ENCODE measurements at regions of chr3 and their contacts with region 1.

Region 1: GRCh38 chr3:121855555-121855954 is 20.5 kb downstream of the EAF2 start:
- DNase-seq: peak; percentile 36
- H3K4me3 Mint-ChIP-seq: no peak overlapping the region
- H3K27ac Mint-ChIP-seq: no peak overlapping the region
- H3K4me1 Mint-ChIP-seq: no peaks in the 10 kb centered on the region
- H3K27me3 Mint-ChIP-seq: no peaks in the 10 kb centered on the region
- CTCF ChIP-seq: peak; percentile 25

Region 2: DNA sequence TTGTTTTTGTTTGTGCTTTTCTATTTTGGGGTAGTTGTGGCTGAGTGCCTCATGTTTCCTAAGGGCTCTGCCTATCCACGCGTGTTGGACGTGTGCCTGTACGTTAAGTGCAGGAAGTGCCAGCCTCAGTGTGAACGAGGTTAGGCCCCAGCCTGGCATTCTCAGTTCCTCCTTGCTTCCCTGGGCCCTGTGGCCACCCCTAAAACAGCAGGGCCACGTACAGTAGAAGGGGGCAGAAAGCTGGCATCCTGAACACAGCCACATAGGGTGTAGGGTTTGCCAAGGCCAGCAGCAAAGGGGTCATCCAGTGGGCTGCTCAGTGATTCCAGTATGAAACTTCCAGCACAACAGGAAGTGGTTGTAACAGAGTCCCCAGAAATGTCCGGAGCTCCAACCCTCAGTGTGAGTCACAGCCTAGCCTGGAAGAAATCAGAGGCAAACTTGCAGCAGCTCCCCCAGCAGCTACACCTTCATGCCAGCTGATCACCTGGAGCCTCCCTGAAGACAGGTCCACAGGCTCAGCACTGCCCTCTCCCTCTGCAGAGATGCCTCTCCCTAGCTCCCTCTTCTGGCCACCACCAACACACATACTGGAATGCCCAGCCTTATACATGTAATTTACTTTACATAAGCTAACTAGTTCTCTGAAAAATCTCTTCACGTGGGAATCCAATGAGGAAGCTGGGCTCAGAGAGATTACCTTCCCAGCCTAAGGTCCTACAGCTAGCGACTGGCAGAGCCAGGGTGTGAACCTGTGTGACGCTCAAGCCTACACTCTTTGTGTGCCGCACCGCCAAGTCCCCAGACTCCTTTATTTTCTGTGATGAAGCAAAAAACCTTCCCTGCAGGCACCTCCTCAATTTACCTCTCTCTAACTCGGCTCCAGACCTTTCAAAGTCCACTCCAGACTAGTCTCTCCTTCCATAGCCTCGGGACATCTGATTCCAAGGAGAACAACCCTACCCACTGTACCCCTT is 139.9 kb after region 1 on chr3:
- CTCF ChIA-PET with region 1: no interaction called
- intact Hi-C with region 1: loop called (anchors 1 kb)
- DNase-seq: peak; percentile 82
- H3K4me3 Mint-ChIP-seq: no peak overlapping the region
- H3K27ac Mint-ChIP-seq: peak overlapping the region; percentile 89
- H3K4me1 Mint-ChIP-seq: peaks cover 37% of the 10 kb centered on the region
- H3K27me3 Mint-ChIP-seq: no peaks in the 10 kb centered on the region
- CTCF ChIP-seq: peak; percentile 54

Region 3: DNA sequence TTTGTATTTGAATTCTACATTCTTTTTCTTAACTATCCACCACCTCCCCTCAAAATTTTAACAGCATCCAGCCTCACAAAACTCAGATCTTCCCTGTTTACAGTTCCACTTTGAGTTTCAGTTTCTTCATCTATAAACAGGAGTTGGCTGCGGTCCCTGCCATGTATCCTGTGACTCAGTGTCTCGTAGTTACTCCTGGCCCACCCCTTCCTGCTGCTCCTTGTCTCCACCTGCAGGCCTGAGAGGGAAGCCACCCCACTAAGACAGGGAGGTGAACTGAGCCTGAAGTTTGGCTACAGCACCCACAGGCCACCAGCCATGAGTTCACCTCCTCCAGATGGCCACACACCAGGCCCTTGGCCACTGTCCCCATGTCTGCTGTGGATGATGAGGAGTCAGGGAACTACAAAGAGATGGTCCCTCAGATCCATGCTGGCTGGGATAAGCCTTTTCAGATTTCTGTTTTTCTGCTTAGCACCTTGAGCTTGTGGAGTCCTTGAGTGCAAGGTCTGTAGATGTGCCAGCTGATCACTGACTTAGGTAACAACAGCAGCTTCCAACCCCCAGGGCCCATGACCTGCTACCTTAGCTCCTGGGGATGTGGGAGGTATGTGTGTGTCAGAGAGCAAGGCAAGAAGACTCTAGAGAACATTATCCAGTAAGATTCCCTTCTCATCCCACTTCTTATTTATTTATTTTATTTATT is 237.1 kb after region 1 on chr3:
- CTCF ChIA-PET with region 1: no interaction called
- intact Hi-C with region 1: loop called (anchors 2 kb)
- DNase-seq: peak; percentile 56
- H3K4me3 Mint-ChIP-seq: no peak overlapping the region
- H3K27ac Mint-ChIP-seq: no peak overlapping the region
- H3K4me1 Mint-ChIP-seq: peaks cover 11% of the 10 kb centered on the region
- H3K27me3 Mint-ChIP-seq: no peaks in the 10 kb centered on the region
- CTCF ChIP-seq: peak; percentile 39

Region 4: DNA sequence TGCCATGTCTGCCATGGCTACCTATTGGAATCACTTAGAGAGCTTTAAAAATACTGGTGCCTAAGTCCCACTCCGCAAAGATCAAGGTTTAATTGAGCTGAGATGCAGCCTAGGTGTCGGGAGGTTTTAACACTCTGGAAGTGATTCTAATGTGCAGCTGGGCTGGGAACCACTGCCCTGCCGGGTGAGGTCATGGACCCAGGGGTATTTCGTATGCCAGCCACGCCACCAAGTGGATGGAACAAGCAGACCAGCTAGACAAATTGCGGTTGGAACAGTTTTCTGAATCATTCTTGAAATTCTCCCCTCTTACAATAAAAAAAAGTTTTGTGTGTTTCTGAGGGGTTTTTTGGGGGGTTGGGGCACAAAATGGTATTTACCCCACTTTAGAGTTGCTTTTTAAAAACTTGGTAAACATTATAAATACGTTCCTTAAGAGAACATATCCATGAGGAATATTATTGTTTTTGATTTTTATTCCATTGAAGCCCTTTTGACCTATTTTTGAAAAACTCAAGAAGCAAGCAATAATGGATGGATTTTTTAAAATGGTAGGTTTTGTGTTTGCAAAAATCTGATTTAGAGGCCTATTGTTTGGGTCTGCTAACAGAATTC is 403.3 kb after region 1 on chr3:
- CTCF ChIA-PET with region 1: no interaction called
- intact Hi-C with region 1: loop called (anchors 10 kb)
- DNase-seq: peak; percentile 79
- H3K4me3 Mint-ChIP-seq: no peak overlapping the region
- H3K27ac Mint-ChIP-seq: no peak overlapping the region
- H3K4me1 Mint-ChIP-seq: no peaks in the 10 kb centered on the region
- H3K27me3 Mint-ChIP-seq: no peaks in the 10 kb centered on the region
- CTCF ChIP-seq: peak; percentile 60

Measured in Calu3 (cell line).